ENCODE measurements at regions of chr7 and their contacts with region 1.

Region 1: DNA sequence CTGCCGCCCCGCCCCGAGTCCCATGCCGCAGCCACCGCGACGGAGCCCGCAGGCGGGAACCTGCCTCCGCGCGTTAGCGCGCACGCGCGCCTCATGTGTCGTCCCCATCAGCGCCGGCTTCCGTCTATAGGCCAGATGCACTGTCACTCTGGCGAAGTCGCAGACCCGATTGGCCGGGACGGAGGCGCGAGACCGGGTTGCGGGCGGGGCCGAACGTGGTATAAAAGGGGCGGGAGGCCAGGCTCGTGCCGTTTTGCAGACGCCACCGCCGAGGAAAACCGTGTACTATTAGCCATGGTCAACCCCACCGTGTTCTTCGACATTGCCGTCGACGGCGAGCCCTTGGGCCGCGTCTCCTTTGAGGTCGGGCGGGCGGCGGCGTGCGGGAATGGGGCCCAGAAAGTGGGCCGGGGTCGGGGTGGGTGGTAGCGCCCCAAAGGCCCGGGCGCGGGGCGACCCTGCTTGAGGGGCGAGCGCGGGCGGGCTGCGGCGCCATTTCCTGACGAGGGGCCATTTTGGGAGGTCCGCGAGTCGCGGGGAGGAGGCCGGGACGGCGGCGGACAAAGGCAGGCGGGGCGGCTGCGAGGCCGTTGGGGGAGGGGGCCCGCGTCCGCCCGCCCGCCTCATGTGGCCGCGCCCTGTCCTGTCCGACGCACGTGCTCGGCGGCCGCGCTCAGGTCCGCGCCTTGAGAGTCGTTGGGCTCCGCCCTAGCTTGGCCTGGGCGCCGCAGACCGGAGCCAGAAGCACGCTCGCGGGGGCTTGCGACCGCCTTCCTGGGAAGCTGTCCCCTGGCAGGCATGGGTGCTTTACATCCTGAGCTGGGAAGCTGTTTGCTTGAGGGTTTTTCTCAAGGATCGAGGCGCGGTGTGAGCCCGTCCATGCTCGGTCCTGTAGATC is at the start of gene PPIA:
- DNase-seq: peak; percentile 100
- H3K4me3 ChIP-seq: peak within 1 kb of the TSS; percentile 99
- H3K27ac ChIP-seq: peak within 1 kb of the TSS; percentile 82
- H3K4me1 ChIP-seq: peaks cover 24% of the 10 kb centered on the region
- CTCF ChIP-seq: no peak
- total RNA-seq, gene PPIA: 2,827 and 2,935 TPM in 2 replicates

Region 2: GRCh38 chr7:44587843-44588711 is 208.6 kb before region 1 on chr7:
- CTCF ChIA-PET with region 1: no interaction called
- POLR2A ChIA-PET with region 1: interaction called, 3 read pairs
- intact Hi-C with region 1: loop called (anchors 1 kb)
- DNase-seq: peak; percentile 73
- H3K4me3 ChIP-seq: no peak overlapping the region
- H3K27ac ChIP-seq: no peak overlapping the region
- H3K4me1 ChIP-seq: peaks cover 9% of the 10 kb centered on the region
- CTCF ChIP-seq: peak; percentile 93

Region 3: DNA sequence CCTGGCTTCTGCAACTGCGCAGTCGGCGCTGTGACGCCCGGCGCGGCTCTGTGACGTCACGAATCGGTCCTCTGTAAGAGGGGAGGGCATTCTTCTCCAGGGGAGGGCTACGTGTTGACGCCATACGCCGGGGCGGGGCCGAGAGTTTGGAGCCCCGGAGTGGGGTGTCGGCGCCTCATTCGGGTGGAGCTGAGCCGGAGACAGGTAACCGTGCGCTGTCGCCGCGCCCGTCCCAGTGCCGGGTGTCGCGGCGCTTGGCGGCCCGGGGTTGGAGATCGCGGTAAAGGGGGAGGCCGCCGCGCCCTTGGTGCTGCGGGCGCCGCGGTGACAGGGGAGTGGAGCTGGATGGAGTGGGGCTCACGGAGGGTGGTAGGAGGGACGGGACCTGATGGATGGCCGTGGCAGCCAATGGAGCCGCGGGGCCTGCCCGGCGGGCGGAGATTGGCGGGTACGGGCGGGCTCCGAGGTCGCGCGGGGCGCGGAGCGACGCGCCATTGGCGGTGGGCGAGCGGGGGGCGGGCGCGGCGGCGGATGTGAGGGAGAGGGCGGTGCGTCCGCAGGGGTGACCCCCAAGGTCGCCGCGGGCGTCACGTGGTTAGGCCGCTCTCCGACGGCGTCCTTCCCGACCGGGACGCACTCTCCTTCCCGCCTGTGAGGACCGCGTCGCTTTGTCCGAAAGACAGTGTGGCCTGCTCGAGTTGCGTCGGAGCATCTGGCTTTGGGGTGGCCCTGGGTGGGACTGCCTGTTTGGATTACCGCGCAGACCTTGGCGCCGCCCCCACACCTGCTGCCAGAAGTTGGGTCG is 190.0 kb before region 1 on chr7 and contains the start of gene OGDH:
- CTCF ChIA-PET with region 1: no interaction called
- POLR2A ChIA-PET with region 1: interaction called, 6 read pairs
- intact Hi-C with region 1: loop called (anchors 1 kb)
- DNase-seq: peak; percentile 99
- H3K4me3 ChIP-seq: peak within 1 kb of the TSS; percentile 77
- H3K27ac ChIP-seq: peak within 1 kb of the TSS; percentile 71
- H3K4me1 ChIP-seq: peaks cover 33% of the 10 kb centered on the region
- CTCF ChIP-seq: no peak
- total RNA-seq, gene OGDH: 32.6 and 47.6 TPM in 2 replicates

Measured in OCI-LY7 (cell line).